ENCODE measurements at regions of chr12 and their contacts with region 1.

Region 1: DNA sequence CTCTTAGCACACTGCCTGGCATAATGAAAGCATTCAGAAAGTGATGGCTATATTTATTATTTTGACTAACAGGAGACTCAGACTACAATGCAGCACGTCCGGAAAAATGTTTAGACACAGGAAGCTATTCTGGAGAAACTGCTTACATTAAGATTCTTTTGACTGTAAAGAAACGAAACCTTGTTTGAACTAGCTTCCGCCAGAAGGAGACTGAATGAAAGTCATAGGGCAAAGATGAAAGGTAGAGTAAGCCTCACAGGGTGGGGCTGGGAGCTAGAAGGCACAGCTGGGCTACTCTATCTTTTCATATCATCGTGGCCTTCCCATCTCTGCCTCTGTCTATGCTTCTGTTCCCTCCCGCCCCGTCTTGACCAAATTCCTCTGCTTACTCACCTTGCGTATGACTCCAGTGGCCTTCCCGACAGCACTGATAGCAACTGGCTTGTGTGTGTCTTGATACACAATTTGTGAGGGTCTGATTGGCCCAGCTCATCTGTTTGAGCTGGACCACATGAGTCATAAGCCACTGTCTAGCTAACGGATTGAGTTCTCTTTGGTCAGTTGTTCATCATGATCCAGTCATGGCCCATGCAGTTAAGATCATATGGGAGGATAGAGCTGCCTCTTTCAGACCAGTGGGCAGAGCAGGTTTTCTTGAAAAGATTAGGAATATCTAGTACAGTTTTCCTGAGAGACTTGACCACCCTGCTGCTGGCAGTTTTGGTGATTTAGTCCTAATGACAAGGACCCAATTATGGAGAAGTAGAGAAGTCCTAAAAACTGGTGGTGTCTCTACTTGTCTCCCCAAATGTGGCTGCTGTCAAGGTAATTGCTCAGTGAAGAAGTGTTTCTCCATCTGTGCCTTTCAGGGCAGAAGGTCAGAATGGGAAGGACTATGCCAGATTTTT is 151.5 kb upstream of the SLC38A2 start:
- DNase-seq: peak; percentile 76 to 96
- ATAC-seq: peak; percentile 96 to 97
- H3K4me3 ChIP-seq: peak overlapping the region; percentile 7
- H3K27ac ChIP-seq: peak overlapping the region; percentile 70 to 84
- H3K4me1 ChIP-seq: peaks cover 33% of the 10 kb centered on the region
- CTCF ChIP-seq: no peak
- EP300 ChIP-seq: peak; percentile 53 to 55; a peak in 2 of 5 replicates
- POLR2A ChIP-seq: no peak
- RAD21 ChIP-seq: peak in 1 of 2 experiments; percentile 40; a peak in 1 of 5 replicates

Region 2: GRCh38 chr12:46382964-46383653 is 141.0 kb before region 1 on chr12:
- CTCF ChIA-PET with region 1: interaction called, 3 read pairs
- POLR2A ChIA-PET with region 1: interaction called, 10 read pairs
- DNase-seq: peak; percentile 73 to 98
- ATAC-seq: peak; percentile 85 to 86
- H3K4me3 ChIP-seq: peak overlapping the region; percentile 54
- H3K27ac ChIP-seq: peak overlapping the region; percentile 93 to 99
- H3K4me1 ChIP-seq: peaks cover 41% of the 10 kb centered on the region
- CTCF ChIP-seq: peak; percentile 36; the same call in 2 of the 3 replicates
- EP300 ChIP-seq: peak in 1 of 2 experiments; percentile 50; a peak in 1 of 5 replicates
- POLR2A ChIP-seq: peak; percentile 68
- RAD21 ChIP-seq: peak in 1 of 2 experiments; percentile 32; a peak in 2 of 5 replicates

Region 3: GRCh38 chr12:46473634-46474329 is 50.3 kb before region 1 on chr12:
- CTCF ChIA-PET with region 1: no interaction called
- POLR2A ChIA-PET with region 1: interaction called, 13 read pairs
- DNase-seq: peak; percentile 86 to 96
- ATAC-seq: peak; percentile 96
- H3K4me3 ChIP-seq: peak overlapping the region; percentile 20; the same call in 1 of the 3 replicates
- H3K27ac ChIP-seq: peak overlapping the region; percentile 83 to 93
- H3K4me1 ChIP-seq: peaks cover 65% of the 10 kb centered on the region
- CTCF ChIP-seq: no peak
- EP300 ChIP-seq: peak; percentile 93 to 96
- POLR2A ChIP-seq: no peak
- RAD21 ChIP-seq: peak; percentile 54 to 78

Region 4: DNA sequence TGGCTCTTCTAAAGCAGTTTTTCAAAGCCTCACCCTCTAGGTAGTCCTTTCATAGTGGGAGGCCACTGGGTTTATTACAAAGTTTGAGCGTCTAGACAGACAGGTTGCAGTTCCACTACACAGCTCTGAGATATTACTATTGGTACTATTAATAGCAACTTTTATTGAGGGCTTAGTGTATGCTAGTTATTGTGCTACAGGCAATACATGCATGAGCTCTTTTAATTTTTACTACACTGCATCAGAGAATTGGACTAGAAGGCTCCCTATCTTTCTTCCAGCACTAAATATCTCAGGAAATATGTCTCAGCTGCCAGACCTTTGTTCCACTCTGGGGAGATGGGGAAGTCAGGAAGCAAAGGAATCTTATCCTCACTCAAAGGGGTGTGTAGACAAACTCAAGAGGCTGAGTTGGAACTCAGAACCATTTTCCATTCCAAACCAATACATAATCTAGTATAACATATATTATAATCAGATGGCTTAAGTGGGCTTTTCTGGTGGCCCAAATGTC is 10.3 kb after region 1 on chr12:
- CTCF ChIA-PET with region 1: interaction called, 12 read pairs
- POLR2A ChIA-PET with region 1: interaction called, 3 read pairs
- DNase-seq: no peak
- ATAC-seq: no peak
- H3K4me3 ChIP-seq: no peak overlapping the region
- H3K27ac ChIP-seq: no peak overlapping the region
- H3K4me1 ChIP-seq: peaks cover 11% of the 10 kb centered on the region; the same call in 2 of the 3 replicates
- CTCF ChIP-seq: no peak
- EP300 ChIP-seq: no peak
- POLR2A ChIP-seq: no peak
- RAD21 ChIP-seq: no peak